ENCODE measurements at regions of chr1 and their contacts with region 1.

Region 1: DNA sequence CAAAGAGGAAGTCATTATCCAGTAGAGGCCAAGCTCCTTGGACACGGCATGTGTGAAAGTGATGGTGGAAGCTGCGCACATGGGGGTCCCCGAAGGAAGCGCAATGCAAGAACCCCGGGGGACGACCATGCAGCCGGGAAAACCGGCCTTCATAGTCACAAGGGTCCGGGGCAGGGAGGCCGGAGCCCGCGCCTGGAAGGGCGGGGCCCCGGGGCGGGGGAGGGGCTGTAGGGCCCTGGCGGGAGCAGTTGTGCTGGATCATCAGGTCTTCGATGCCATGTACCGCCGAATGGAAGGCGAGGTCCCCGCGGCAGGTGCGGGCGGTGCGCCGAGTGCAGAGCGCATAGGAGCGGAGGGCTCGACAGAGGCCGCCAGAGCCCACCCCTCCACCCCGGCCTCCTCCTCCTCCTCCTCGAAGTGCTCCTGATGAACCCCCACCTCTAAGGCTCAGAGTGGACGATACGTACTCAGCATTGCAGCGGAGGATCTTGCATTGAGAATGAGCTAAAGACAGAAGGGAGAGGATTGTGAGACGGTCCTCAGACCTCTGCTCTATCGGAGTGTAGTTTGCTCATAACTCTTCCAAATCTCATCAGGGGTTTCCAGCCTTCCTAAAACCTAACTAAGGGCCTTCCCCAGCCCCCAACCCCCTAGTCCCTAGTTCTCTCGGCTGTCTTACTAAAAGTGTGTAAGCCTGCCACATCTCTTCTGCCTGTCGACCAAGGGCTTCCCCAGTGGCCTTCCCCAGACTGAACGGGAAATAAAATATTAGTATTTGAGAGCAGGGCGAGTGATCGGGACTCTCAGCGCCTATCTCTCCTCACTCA is 2.1 kb downstream of the HJV start:
- DNase-seq: no peak
- ATAC-seq: peak; percentile 27
- H3K4me3 ChIP-seq: no peak overlapping the region
- H3K27ac ChIP-seq: no peak overlapping the region
- H3K4me1 ChIP-seq: peaks cover 17% of the 10 kb centered on the region
- H3K27me3 ChIP-seq: no peaks in the 10 kb centered on the region
- CTCF ChIP-seq: no peak
- POLR2A ChIP-seq: no peak

Region 2: GRCh38 chr1:145849356-145850160 is 169.9 kb before region 1 on chr1:
- intact Hi-C with region 1: loop called (anchors 5 kb)
- DNase-seq: no peak
- ATAC-seq: no peak
- H3K4me3 ChIP-seq: no peak overlapping the region
- H3K27ac ChIP-seq: no peak overlapping the region
- H3K4me1 ChIP-seq: peaks cover 18% of the 10 kb centered on the region
- H3K27me3 ChIP-seq: no peaks in the 10 kb centered on the region
- CTCF ChIP-seq: no peak
- POLR2A ChIP-seq: no peak

Region 3: DNA sequence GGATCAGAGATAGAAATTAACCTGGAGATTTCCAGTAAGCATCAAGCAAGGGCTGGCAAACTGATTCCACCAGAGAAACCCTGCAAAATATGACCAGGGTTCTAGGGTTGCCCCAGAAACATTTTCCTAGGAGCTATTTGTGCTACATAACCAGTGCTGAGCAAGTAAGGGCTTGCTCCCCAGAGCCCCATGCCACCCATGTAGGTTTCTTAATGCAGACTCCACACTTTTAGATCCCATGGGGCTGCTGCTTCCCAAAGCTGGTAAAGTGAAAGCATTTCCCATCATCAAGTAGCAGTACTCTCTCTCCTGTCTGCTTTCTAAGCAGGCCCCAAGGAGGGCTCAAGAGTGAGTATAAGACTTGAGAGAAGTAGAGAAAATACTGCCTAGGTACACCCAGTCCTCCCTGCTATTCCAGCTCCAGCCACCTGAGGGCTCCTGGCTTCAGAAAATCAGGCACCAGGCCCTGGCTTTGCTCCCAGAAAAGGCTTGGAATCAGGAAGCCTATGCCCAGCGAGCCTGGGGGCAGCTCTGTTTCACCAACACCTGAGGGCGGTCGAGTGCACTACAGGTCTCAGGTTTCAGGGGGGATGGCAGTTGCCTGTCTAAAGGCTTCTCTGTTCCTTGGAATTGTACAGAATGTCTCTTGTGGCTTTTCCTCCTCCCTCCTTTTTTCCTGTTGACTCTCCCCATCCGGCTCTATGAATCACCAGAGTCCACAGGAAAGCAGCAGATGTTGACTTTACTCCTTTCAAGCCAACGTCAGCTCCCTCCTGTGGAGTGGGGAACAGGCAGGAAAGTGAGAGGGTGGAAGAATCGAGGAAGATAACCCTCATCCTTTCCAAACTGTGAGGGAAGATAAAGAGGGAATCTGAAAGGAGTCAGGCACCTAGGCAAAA is 127.6 kb before region 1 on chr1:
- intact Hi-C with region 1: no loop called
- DNase-seq: peak; percentile 97 to 99 (median 98)
- ATAC-seq: peak; percentile 96
- H3K4me3 ChIP-seq: no peak overlapping the region
- H3K27ac ChIP-seq: peak overlapping the region; percentile 86 to 95 (median 92)
- H3K4me1 ChIP-seq: peaks cover 30% of the 10 kb centered on the region
- H3K27me3 ChIP-seq: no peaks in the 10 kb centered on the region
- CTCF ChIP-seq: peak; percentile 86 to 99 (median 99)
- POLR2A ChIP-seq: peak in 2 of 3 donors; percentile 48 to 53

Region 4: DNA sequence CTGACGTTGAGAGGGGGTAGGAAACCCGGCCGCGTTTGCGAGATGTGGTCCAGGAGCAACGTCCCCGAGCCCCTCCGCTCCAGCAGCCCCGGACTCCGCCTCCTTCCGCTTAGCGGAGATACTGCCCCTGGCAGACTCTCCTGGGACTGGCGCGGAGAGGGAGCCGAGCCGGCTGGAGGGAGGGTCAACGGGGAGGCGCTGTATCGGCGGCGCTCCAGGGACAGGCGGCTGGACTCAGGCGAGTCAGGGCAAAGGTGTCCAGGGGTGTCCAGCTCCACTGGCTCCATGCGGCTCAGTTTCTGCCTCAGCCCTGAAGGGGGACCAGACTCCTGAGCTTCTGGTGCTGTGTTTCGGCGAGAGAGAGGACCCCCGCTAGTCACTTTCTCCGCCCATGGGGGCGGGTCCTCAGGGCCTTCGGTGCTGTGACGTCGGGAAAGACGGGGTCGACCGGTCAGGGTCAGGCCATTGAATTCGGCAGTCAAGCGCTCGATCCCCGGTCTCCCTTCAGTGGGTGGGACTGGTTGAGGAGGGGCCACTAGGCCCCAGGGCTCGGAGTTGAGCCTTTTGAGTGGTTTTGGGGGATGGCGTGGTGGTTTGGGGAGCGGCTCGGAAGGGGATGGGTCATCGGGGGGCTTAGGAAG is 58.9 kb before region 1 on chr1:
- intact Hi-C with region 1: no loop called
- DNase-seq: peak; percentile 67 to 80 (median 78)
- ATAC-seq: peak; percentile 28
- H3K4me3 ChIP-seq: peak overlapping the region; percentile 44 to 45
- H3K27ac ChIP-seq: peak overlapping the region in 3 of 4 donors; percentile 48 to 62 (median 48)
- H3K4me1 ChIP-seq: peaks cover 60% of the 10 kb centered on the region
- H3K27me3 ChIP-seq: no peaks in the 10 kb centered on the region
- CTCF ChIP-seq: peak in 5 of 7 experiments; percentile 7 to 23 (median 21)
- POLR2A ChIP-seq: peak; percentile 25 to 68 (median 53)

Region 5: GRCh38 chr1:145972580-145972979 is 46.9 kb before region 1 on chr1:
- intact Hi-C with region 1: loop called (anchors 5 kb)
- DNase-seq: no peak
- ATAC-seq: no peak
- H3K4me3 ChIP-seq: no peak overlapping the region
- H3K27ac ChIP-seq: no peak overlapping the region
- H3K4me1 ChIP-seq: peaks cover 5% of the 10 kb centered on the region
- H3K27me3 ChIP-seq: no peaks in the 10 kb centered on the region
- CTCF ChIP-seq: no peak
- POLR2A ChIP-seq: no peak

Region 6: GRCh38 chr1:145985502-145986439 is 33.7 kb before region 1 on chr1:
- intact Hi-C with region 1: no loop called
- DNase-seq: peak in 3 of 4 donors; percentile 58 to 83 (median 70)
- ATAC-seq: peak; percentile 43
- H3K4me3 ChIP-seq: no peak overlapping the region
- H3K27ac ChIP-seq: peak overlapping the region; percentile 49 to 79 (median 75)
- H3K4me1 ChIP-seq: peaks cover 82% of the 10 kb centered on the region
- H3K27me3 ChIP-seq: no peaks in the 10 kb centered on the region
- CTCF ChIP-seq: no peak
- POLR2A ChIP-seq: no peak

Measured in body of pancreas (tissue), 4 donors.